ENCODE measurements at regions of chr9 and their contacts with region 1.

Region 1: GRCh38 chr9:137578518-137579258 is at the start of gene DPH7:
- DNase-seq: peak; percentile 95 to 100 (median 99)

Region 2: GRCh38 chr9:137590462-137591383 is 12.0 kb after region 1 on chr9 and contains the start of gene ZMYND19:
- intact Hi-C with region 1: no loop called
- DNase-seq: peak; percentile 72 to 98 (median 77)

Region 3: GRCh38 chr9:137618105-137619067 is 39.7 kb after region 1 on chr9 and contains the start of gene EHMT1:
- intact Hi-C with region 1: loop called (anchors 5 kb)
- DNase-seq: peak; percentile 74 to 98 (median 79)